ENCODE measurements at regions of chr12 and their contacts with region 1.

Region 1: GRCh38 chr12:95532851-95533250 is 18.4 kb downstream of the USP44 start:
- DNase-seq: no peak
- ATAC-seq: no peak
- H3K4me3 ChIP-seq: no peak overlapping the region
- H3K27ac ChIP-seq: no peak overlapping the region
- H3K4me1 ChIP-seq: peaks cover 0 to 2% (median 0%) of the 10 kb centered on the region in 12 donors
- H3K27me3 ChIP-seq: no peaks in the 10 kb centered on the region
- CTCF ChIP-seq: no peak
- POLR2A ChIP-seq: no peak

Region 2: DNA sequence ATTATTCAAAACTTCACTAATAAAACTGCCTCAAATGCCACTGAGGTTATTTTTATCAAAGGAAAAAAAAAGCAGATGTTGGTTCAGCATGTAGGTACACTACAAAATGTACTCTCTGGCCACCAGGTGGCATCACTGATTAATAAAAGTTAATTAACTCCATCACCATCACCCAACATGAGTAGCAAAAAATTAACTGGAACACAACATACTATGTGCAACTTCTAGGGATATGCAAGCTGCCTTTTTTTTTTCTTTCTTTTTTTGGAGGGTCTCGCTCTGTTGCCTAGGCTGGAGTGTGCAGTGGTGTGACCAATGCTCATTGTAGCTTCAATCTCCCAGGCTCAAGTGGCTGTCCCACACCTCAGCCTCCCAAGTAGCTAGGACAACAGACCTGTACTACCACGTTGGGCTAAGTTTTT is 415.7 kb before region 1 on chr12:
- intact Hi-C with region 1: loop called (anchors 1 to 5 kb)
- DNase-seq: peak in 4 of 5 donors; percentile 50 to 72 (median 67)
- ATAC-seq: peak; percentile 70 to 88 (median 85)
- H3K4me3 ChIP-seq: no peak overlapping the region
- H3K27ac ChIP-seq: peak overlapping the region in 2 of 12 donors; percentile 35 to 40
- H3K4me1 ChIP-seq: peaks cover 0 to 24% (median 9%) of the 10 kb centered on the region in 12 donors
- H3K27me3 ChIP-seq: no peaks in the 10 kb centered on the region
- CTCF ChIP-seq: peak; percentile 62 to 82 (median 77)
- POLR2A ChIP-seq: no peak

Region 3: GRCh38 chr12:95343461-95344230 is 189.2 kb before region 1 on chr12:
- intact Hi-C with region 1: loop called in 3 of 10 experiments (anchors 5 to 10 kb)
- DNase-seq: no peak
- ATAC-seq: no peak
- H3K4me3 ChIP-seq: no peak overlapping the region
- H3K27ac ChIP-seq: no peak overlapping the region
- H3K4me1 ChIP-seq: peaks cover 0 to 4% (median 0%) of the 10 kb centered on the region in 12 donors
- H3K27me3 ChIP-seq: no peaks in the 10 kb centered on the region
- CTCF ChIP-seq: no peak
- POLR2A ChIP-seq: no peak

Region 4: DNA sequence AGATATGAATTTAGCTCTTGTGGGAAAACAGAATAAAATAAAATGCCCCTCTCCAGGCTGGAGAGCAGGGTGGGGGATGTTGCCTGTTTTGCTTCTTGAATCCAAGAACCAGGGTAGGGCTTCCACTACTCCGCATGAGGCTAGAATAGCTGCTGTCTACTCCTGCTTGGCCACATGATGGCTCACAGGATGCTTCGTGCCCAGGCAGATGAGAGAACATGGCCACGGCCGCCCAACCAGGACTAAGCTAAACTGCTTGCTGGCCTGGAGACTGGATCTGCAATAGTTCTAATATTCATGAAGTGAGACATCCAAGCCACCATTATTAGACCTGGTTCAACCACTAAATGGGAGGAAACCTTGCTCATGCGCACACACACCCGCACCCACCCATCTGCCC is 181.1 kb before region 1 on chr12:
- intact Hi-C with region 1: loop called in 8 of 10 experiments (anchors 2 to 10 kb)
- DNase-seq: peak in 4 of 5 donors; percentile 30 to 56 (median 39)
- ATAC-seq: peak; percentile 81 to 88 (median 87)
- H3K4me3 ChIP-seq: no peak overlapping the region
- H3K27ac ChIP-seq: no peak overlapping the region
- H3K4me1 ChIP-seq: no peaks in the 10 kb centered on the region
- H3K27me3 ChIP-seq: no peaks in the 10 kb centered on the region
- CTCF ChIP-seq: peak in 8 of 12 donors; percentile 12 to 41 (median 29)
- POLR2A ChIP-seq: no peak

Region 5: GRCh38 chr12:95460896-95461661 is 71.8 kb before region 1 on chr12:
- intact Hi-C with region 1: no loop called
- DNase-seq: no peak
- ATAC-seq: no peak
- H3K4me3 ChIP-seq: no peak overlapping the region
- H3K27ac ChIP-seq: no peak overlapping the region
- H3K4me1 ChIP-seq: no peaks in the 10 kb centered on the region
- H3K27me3 ChIP-seq: no peaks in the 10 kb centered on the region
- CTCF ChIP-seq: no peak
- POLR2A ChIP-seq: no peak

Region 6: GRCh38 chr12:95505039-95505438 is 27.8 kb before region 1 on chr12:
- intact Hi-C with region 1: no loop called
- DNase-seq: no peak
- ATAC-seq: no peak
- H3K4me3 ChIP-seq: no peak overlapping the region
- H3K27ac ChIP-seq: no peak overlapping the region
- H3K4me1 ChIP-seq: no peaks in the 10 kb centered on the region
- H3K27me3 ChIP-seq: no peaks in the 10 kb centered on the region
- CTCF ChIP-seq: no peak
- POLR2A ChIP-seq: no peak

Measured in heart left ventricle (tissue), 16 donors.